Activated CD4-positive, alpha-beta T cell treated with anti-CD3 and anti-CD28 coated beads, Interleukin-2, amount 10 ng/mL, durations not matched to agents 24 days and 14 days (primary cell): ENCODE measurements at regions of chr2 and their contacts with region 1.

Region 1: DNA sequence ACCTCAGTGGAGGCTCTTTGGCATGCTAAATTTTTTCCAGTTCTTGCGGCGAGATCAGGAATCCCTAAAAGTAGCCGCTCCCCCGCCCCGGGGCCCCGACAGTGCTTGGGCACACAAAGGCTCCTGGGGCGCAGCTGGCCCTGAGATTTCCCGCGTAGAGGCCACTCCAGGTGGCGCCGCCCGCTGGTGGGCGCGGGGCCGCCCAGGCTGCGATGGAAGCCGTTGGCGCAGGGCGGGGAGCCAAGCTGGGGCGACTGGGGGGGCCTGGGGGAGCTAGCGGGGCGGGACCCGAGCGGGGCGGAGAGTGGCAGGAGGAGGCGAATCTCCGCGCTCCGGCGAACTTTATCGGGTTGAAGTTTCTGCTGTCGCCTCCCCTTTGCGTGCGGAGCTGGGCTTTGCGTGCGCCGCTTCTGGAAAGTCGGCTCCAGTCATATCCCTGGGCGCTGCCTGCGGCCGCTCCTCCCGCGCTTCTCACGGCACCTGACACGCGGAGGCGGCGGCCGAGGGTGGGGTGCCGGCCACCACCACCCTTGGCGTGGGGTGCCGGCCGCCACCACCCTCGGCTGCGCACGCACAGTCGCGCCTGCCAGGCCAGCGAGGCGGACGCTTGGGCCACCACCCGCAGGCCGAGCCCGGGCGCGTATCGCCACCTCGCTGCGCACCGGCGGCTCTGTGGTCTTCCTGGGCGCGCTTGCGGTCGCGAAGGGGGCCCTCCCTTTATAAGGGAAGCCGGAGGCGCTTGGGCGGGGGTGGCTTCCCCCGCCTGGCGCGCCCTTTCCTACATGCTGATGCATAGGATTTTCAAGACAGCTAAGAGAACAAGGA is 867 bp upstream of the CYP1B1 start:
- DNase-seq: peak; percentile 91
- H3K4me3 Mint-ChIP-seq: peak overlapping the region; percentile 86
- H3K27ac Mint-ChIP-seq: peak overlapping the region; percentile 90
- H3K4me1 Mint-ChIP-seq: peaks cover 31% of the 10 kb centered on the region
- H3K27me3 Mint-ChIP-seq: peaks cover 51% of the 10 kb centered on the region

Region 2: DNA sequence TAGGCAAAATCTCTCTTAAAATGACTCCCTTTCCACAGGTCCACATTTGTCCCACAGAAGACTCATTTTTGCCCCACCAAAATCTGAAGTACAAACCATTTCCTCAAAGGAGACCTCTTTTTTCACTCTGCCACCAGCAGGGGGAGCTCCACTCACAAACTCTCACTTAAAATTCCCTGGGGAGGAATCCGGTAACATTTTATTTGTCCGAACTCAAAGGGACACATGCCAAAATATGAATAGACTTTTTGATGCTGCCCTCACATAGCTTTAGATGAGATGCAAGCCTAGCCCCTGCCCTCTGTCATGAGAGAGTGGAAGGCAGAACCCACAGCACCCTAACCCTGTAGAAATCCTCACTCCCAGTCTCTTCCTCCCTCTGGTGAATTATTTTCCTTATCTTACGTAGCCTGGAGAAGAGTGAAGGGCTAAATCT is 94.7 kb before region 1 on chr2:
- intact Hi-C with region 1: loop called (anchors 1 kb)
- DNase-seq: peak; percentile 86
- H3K4me3 Mint-ChIP-seq: no peak overlapping the region
- H3K27ac Mint-ChIP-seq: no peak overlapping the region
- H3K4me1 Mint-ChIP-seq: peaks cover 8% of the 10 kb centered on the region
- H3K27me3 Mint-ChIP-seq: peaks cover 13% of the 10 kb centered on the region

Region 3: DNA sequence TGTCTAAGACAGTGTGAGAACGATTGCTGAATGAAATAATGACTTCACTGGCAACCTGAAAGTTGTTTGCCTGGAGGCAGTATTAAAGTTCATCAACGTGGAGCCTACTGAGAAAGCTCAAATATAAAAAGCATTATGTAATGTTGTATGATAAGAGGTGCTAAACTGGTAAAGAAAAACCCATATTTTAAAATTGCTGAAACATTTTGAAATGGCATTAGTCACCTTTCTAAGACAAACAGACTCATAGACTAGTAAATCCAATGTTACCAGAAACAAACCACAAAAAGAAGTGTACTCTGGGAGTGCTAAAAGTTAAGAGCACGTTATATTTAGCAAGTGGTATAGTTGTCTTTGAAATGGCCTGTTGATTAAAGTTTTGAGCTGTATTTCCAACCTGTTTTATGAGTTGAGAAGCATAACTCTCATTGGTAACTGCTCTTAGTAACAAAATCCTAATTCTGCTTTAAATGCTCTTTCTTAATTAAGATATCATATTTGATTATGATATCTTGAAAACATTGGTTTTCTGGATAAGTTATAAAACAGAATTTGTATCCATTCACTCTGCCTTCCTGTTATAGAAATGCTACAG is 63.6 kb before region 1 on chr2:
- intact Hi-C with region 1: no loop called
- DNase-seq: no peak
- H3K4me3 Mint-ChIP-seq: no peak overlapping the region
- H3K27ac Mint-ChIP-seq: no peak overlapping the region
- H3K4me1 Mint-ChIP-seq: no peaks in the 10 kb centered on the region
- H3K27me3 Mint-ChIP-seq: peaks cover 3% of the 10 kb centered on the region

Region 4: GRCh38 chr2:38037757-38038621 is 38.8 kb before region 1 on chr2:
- intact Hi-C with region 1: loop called (anchors 1 kb)
- DNase-seq: peak; percentile 67
- H3K4me3 Mint-ChIP-seq: peak overlapping the region; percentile 83
- H3K27ac Mint-ChIP-seq: peak overlapping the region; percentile 74
- H3K4me1 Mint-ChIP-seq: peaks cover 15% of the 10 kb centered on the region
- H3K27me3 Mint-ChIP-seq: peaks cover 38% of the 10 kb centered on the region

Region 5: DNA sequence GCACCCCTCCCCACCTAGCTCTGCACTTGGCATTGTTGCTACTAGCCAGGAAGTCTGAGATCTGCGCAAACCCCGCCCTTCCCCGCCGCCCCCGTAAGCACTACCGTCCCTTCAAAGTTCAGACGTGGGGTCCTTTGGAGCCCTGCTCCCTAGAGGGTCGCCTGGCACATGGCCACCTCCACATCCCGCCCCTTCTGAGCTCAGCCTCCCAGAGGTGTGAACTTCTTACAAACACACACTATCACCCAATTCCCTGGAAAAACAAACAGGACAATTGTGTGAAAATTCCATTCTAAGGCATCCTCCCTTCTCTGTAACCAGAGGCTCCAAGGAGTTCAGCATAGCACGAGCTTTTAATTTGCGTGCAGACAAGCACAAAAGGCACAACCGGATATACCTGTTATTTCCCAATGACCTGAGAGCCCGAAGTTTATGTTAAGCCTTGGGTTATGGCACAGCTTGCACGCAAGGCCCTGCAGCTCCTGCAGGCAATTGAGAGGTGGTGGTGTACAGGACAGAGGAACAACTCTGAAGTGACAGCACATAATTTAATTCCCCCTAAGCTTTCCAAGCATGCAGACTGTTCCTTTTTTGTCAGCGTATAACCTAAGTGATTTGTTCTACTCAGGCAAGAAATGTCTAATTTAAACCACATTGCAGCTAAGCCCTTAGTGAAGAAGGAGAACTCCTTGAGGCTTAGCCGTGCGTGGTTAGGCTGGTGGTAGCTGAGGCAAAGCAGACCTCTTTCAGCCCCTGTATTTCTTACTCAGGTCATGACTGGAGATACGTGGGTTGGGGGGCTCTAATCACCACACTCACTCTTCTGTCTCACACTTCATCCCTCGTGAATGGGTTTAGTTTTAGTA is 19.4 kb after region 1 on chr2:
- intact Hi-C with region 1: loop called (anchors 1 kb)
- DNase-seq: peak; percentile 67
- H3K4me3 Mint-ChIP-seq: peak overlapping the region; percentile 2
- H3K27ac Mint-ChIP-seq: peak overlapping the region; percentile 25
- H3K4me1 Mint-ChIP-seq: peaks cover 26% of the 10 kb centered on the region
- H3K27me3 Mint-ChIP-seq: peaks cover 41% of the 10 kb centered on the region

Region 6: DNA sequence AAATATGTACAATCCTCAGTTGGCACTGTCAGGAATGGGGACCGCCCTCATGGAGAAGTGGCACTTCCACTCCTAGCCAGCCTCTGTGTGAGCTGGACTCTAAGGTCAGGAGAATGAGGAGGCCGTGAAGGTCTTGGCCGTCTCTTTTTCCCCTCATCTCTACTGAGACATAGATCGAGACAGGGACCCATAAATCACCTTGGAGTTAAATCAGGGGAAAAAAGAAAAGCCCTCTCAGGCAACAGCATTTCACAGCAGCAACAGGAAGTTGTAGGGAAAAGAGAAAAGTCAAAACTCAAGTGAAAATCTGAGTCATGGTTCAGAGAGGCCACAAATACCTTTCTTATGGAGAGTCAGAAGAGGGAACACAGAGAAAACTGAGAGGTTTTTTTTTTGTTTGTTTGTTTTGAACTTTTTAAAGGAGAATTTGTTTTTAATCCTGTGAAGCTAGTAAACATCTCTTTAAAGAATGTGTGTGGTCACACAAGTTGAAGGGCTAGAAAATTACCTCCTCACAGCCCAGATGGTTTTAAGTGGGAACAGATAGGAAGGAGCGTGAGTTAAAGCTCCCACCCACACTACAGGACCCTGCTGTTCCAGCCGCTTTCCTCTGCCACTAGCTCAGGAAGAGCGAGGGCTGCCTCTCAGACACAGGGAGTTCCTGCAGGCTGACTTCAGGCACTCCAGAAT is 29.7 kb after region 1 on chr2:
- intact Hi-C with region 1: loop called (anchors 1 kb)
- DNase-seq: no peak
- H3K4me3 Mint-ChIP-seq: peak overlapping the region; percentile 60
- H3K27ac Mint-ChIP-seq: peak overlapping the region; percentile 79
- H3K4me1 Mint-ChIP-seq: peaks cover 20% of the 10 kb centered on the region
- H3K27me3 Mint-ChIP-seq: peaks cover 20% of the 10 kb centered on the region

Region 7: GRCh38 chr2:38115216-38116032 is 38.6 kb after region 1 on chr2:
- intact Hi-C with region 1: loop called (anchors 1 kb)
- DNase-seq: peak; percentile 92
- H3K4me3 Mint-ChIP-seq: no peak overlapping the region
- H3K27ac Mint-ChIP-seq: no peak overlapping the region
- H3K4me1 Mint-ChIP-seq: peaks cover 8% of the 10 kb centered on the region
- H3K27me3 Mint-ChIP-seq: peaks cover 12% of the 10 kb centered on the region

Region 8: GRCh38 chr2:38264396-38265281 is 187.8 kb after region 1 on chr2:
- intact Hi-C with region 1: loop called (anchors 2 kb)
- DNase-seq: no peak
- H3K4me3 Mint-ChIP-seq: no peak overlapping the region
- H3K27ac Mint-ChIP-seq: no peak overlapping the region
- H3K4me1 Mint-ChIP-seq: peaks cover 43% of the 10 kb centered on the region
- H3K27me3 Mint-ChIP-seq: peaks cover 9% of the 10 kb centered on the region

Region 9: DNA sequence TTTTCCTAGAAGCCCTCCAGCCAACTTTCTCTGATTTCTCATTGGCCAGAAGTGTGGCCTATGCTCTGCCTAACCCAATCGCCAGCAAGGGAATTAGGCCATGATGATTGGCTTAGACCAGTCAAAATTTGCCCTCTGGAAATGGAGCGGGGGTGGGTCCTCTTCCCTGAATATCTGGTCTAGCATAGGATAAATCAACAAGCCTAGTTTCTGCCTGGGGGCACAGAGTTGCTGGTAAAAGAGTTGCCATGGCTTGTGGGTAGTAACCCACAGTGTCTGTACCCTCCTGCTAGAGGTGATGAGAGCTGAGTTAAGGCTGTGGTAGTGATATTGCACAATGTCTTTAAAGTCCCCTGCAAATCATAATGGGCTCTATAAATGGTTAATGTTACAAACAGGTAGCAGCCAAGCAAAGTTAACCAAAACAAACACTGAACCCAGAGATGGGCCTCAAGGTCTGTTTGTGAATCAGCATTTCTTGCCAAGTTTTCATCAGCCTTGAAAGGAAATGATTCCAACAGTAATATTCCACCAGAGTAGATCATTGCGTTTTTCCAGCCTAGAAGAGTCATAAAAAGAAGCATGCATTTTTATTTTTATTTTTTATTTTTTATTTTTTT is 608.4 kb after region 1 on chr2:
- intact Hi-C with region 1: no loop called
- DNase-seq: no peak
- H3K4me3 Mint-ChIP-seq: no peak overlapping the region
- H3K27ac Mint-ChIP-seq: peak overlapping the region; percentile 72
- H3K4me1 Mint-ChIP-seq: peaks cover 46% of the 10 kb centered on the region
- H3K27me3 Mint-ChIP-seq: no peaks in the 10 kb centered on the region

Region 10: DNA sequence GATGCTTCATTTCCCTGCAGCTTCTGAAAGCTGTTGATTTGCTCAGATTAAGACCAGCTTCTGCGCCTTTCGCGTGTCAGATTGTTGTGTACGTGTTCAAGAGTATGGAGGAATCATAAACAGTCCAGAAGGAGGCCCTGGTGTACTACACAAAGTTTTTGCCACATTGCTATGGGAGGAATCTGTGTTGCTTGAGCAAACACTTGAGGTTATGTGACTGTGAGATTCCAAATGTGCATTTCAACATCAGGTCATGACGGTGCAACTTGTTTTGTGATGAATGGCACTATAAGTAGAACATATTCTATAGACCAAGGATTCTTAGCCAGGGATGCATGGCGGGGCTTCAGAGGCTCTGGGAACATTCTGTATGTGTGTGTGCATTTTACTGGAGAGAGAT is 639.4 kb after region 1 on chr2:
- intact Hi-C with region 1: no loop called
- DNase-seq: no peak
- H3K4me3 Mint-ChIP-seq: no peak overlapping the region
- H3K27ac Mint-ChIP-seq: peak overlapping the region; percentile 50
- H3K4me1 Mint-ChIP-seq: peaks cover 52% of the 10 kb centered on the region
- H3K27me3 Mint-ChIP-seq: no peaks in the 10 kb centered on the region